ENCODE measurements at regions of chr18 and their contacts with region 1.

Region 1: GRCh38 chr18:33644494-33644893 is 66.5 kb downstream of the ASXL3 start:
- DNase-seq: no peak
- H3K4me3 ChIP-seq: no peak overlapping the region
- H3K27ac ChIP-seq: no peak overlapping the region
- H3K4me1 ChIP-seq: no peaks in the 10 kb centered on the region
- H3K27me3 ChIP-seq: no peaks in the 10 kb centered on the region
- CTCF ChIP-seq: no peak

Region 2: DNA sequence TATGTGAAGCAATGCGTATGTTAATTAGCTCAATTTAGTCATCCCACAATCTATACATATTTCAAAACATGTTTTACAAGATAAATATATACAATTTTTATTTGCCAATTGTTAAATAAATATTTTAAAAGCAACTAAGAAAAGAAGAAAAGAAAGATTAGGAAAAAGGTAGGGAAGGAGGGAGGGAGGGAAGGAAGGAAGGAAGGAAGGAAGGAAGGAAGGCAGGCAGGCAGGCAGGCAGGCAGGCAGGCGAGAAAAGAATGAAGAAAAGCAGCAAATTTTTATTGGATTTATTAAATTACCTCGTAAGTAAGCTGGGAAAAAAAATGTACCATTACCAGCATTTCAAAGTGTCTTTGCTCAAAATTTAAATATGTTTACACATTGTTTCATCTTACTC is 549.7 kb after region 1 on chr18:
- CTCF ChIA-PET with region 1: interaction called, 16 read pairs
- POLR2A ChIA-PET with region 1: no interaction called
- intact Hi-C with region 1: no loop called
- DNase-seq: no peak
- H3K4me3 ChIP-seq: no peak overlapping the region
- H3K27ac ChIP-seq: no peak overlapping the region
- H3K4me1 ChIP-seq: no peaks in the 10 kb centered on the region
- H3K27me3 ChIP-seq: no peaks in the 10 kb centered on the region
- CTCF ChIP-seq: no peak

Measured in PC-9 (cell line).